ENCODE measurements at regions of chr10 and their contacts with region 1.

Region 1: GRCh38 chr10:91632671-91633550 is at the start of gene PPP1R3C:
- DNase-seq: peak; percentile 70
- H3K4me3 Mint-ChIP-seq: peak within 1 kb of the TSS; percentile 43
- H3K27ac Mint-ChIP-seq: no peak within 1 kb of the TSS
- H3K4me1 Mint-ChIP-seq: peaks cover 6% of the 10 kb centered on the region
- H3K27me3 Mint-ChIP-seq: peaks cover 47% of the 10 kb centered on the region
- total RNA-seq, gene PPP1R3C: 0.07 TPM in 1 of 2 experiments, not detected in the other

Region 2: GRCh38 chr10:91378061-91378460 is 254.8 kb before region 1 on chr10:
- CTCF ChIA-PET with region 1: interaction called, 11 read pairs
- POLR2A ChIA-PET with region 1: no interaction called
- intact Hi-C with region 1: no loop called
- DNase-seq: peak; percentile 19
- H3K4me3 Mint-ChIP-seq: no peak overlapping the region
- H3K27ac Mint-ChIP-seq: peak overlapping the region; percentile 0
- H3K4me1 Mint-ChIP-seq: peaks cover 14% of the 10 kb centered on the region
- H3K27me3 Mint-ChIP-seq: peaks cover 26% of the 10 kb centered on the region

Region 3: GRCh38 chr10:91409869-91410637 is 222.9 kb before region 1 on chr10 and contains the start of gene HECTD2:
- CTCF ChIA-PET with region 1: interaction called, 3 read pairs
- POLR2A ChIA-PET with region 1: no interaction called
- intact Hi-C with region 1: loop called (anchors 5 kb)
- DNase-seq: peak; percentile 82
- H3K4me3 Mint-ChIP-seq: peak within 1 kb of the TSS; percentile 79
- H3K27ac Mint-ChIP-seq: peak within 1 kb of the TSS; percentile 83
- H3K4me1 Mint-ChIP-seq: peaks cover 13% of the 10 kb centered on the region
- H3K27me3 Mint-ChIP-seq: no peaks in the 10 kb centered on the region
- total RNA-seq, gene HECTD2: 4.0 to 5.5 TPM

Region 4: GRCh38 chr10:91520661-91521060 is 112.2 kb before region 1 on chr10:
- CTCF ChIA-PET with region 1: no interaction called
- POLR2A ChIA-PET with region 1: no interaction called
- intact Hi-C with region 1: no loop called
- DNase-seq: no peak
- H3K4me3 Mint-ChIP-seq: no peak overlapping the region
- H3K27ac Mint-ChIP-seq: no peak overlapping the region
- H3K4me1 Mint-ChIP-seq: no peaks in the 10 kb centered on the region
- H3K27me3 Mint-ChIP-seq: no peaks in the 10 kb centered on the region

Region 5: DNA sequence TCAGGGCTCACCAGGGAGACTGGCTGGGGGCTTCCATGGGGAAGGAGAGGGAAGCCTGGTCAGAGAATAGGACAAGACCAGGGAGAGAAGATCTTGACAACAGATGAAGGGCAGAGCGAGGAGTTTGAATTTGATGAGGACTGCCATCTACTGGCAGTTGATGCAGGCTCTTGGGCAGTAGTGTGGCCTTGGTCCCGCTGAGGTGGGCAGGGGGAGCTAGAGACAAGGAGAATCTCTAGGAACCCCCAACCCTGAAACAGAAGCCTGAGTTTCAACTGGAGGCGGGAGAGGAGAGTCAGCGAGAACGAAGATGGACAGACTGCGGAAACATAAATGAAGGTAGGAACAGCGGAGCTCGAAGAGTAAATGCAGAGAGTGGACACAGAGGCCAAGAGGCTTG is 81.1 kb before region 1 on chr10:
- CTCF ChIA-PET with region 1: interaction called, 10 read pairs
- POLR2A ChIA-PET with region 1: no interaction called
- intact Hi-C with region 1: loop called (anchors 1 kb)
- DNase-seq: peak; percentile 15
- H3K4me3 Mint-ChIP-seq: no peak overlapping the region
- H3K27ac Mint-ChIP-seq: no peak overlapping the region
- H3K4me1 Mint-ChIP-seq: no peaks in the 10 kb centered on the region
- H3K27me3 Mint-ChIP-seq: no peaks in the 10 kb centered on the region